Common myeloid progenitor, CD34-positive (primary cell): ENCODE measurements at regions of chr10 and their contacts with region 1.

Region 1: DNA sequence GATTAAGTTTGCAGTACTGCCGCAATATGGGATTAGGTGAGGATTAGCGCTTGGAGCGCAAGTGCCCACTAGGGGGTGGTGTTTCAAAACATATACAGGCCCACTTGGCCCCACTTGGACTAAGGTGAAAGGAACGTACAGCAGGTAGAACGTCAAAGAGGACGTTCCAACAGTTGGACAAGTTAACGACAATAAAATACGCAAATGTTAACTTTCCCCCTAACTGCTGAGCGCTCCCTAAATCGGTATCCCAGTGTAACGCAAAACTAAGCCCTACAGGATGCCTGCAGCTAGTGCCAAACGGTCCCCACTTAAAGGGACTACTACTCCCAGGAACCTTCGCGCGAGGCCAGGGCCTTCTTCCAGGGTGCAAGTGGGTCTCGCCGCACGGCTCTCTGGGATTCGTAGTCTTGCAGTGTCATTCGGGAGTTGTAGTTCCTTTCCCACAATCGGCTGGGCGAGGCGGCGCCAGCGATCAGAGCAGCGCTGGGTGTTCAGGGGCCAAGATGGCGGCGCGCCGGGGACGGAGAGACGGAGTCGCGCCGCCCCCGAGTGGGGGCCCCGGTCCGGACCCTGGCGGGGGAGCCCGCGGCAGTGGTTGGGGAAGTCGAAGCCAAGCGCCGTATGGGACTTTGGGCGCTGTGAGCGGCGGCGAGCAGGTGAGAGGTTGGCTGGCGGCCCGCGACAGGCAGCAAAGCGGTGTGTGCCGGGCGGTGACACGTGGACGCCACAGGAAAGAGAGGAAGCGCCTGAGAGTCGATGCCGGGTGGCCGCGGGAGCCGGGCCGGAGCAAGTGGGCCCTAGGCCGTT is at the start of gene PPRC1:
- DNase-seq: peak; percentile 99 to 100 (median 100)
- H3K4me3 ChIP-seq: peak within 1 kb of the TSS; percentile 70 to 96 (median 91)
- H3K27ac ChIP-seq: peak within 1 kb of the TSS; percentile 70 to 87
- H3K4me1 ChIP-seq: peaks cover 11 to 37% (median 18%) of the 10 kb centered on the region in 4 experiments
- H3K27me3 ChIP-seq: no peaks in the 10 kb centered on the region

Region 2: DNA sequence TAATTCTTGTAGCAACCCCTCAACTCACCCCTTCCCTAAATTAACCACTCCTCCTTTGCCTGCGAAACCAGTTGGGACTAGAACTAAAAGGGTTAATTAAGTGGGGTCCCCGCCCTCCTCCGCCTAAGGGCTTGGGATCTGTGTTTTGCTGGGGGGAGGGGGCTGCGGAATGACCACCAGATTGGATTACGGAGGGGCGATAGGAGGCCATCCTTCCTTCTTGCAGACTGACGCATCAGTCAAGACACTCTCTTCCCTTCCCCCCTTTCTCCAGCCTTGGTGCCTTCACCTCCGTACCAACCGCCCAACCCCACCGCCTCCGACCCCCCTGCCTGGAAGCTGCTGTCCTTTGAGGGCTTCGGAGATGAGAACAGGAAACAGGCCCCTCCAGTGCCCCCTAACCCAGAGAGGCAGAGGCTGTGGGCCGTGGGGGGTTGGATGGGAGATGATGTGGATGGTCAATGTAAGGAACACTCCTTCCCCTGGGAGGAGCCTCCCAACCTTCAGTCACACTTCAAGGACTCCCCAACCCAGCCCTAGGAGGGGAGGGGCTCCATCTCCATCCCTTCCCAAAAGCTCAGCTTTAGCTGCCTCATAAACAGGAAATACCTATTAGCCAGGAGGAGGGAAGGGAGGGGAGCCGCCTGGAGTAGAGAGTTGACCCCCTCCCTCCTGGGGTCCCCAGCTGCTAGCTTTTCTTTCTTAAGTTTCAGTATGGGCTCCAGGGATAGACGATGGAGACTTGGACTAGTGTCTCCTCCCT is 11.6 kb before region 1 on chr10:
- CTCF ChIA-PET with region 1: interaction called, 36 read pairs
- POLR2A ChIA-PET with region 1: interaction called, 4 read pairs
- DNase-seq: peak in 2 of 3 donors; percentile 66 to 73
- H3K4me3 ChIP-seq: peak overlapping the region; percentile 64 to 95 (median 91)
- H3K27ac ChIP-seq: peak overlapping the region; percentile 75 to 89
- H3K4me1 ChIP-seq: peaks cover 15 to 55% (median 46%) of the 10 kb centered on the region in 4 experiments
- H3K27me3 ChIP-seq: no peaks in the 10 kb centered on the region

Region 3: DNA sequence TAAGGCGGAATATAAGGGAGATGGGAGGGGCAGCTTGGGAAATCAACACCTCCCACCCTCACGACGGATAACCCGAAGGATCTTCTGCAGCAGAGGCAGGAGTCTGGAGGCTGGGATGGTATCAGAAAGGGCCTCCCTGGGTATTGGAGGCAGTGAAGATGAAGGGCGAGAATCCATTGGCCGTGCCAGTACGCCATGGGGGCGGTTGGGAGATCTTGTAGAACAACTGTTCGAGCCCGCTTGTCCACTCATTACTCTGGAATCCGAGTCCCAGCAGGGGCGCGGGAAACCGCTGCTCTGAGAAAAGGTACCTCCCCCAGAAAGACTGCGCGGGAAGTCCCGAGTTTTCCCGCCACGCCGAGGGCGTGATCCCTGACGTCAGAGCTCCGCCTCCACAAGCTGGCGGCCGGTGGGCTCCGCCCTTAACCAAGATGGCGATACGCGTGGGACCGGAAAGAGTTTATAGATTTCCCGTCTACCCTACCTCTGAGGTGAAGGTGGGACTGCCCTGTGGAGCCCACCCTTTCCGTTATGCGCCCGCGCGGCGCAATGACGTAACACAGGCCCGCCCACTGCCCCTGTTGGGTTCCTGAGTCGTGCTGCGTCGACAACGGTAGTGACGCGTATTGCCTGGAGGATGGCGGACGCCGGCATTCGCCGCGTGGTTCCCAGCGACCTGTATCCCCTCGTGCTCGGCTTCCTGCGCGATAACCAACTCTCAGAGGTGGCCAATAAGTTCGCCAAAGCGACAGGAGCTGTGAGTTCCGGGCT is 19.2 kb after region 1 on chr10 and contains the start of gene NOLC1:
- CTCF ChIA-PET with region 1: interaction called, 64 read pairs
- POLR2A ChIA-PET with region 1: interaction called, 4 read pairs
- DNase-seq: peak; percentile 99
- H3K4me3 ChIP-seq: peak within 1 kb of the TSS; percentile 67 to 99 (median 98)
- H3K27ac ChIP-seq: peak within 1 kb of the TSS; percentile 89 to 92
- H3K4me1 ChIP-seq: peaks cover 7 to 23% (median 21%) of the 10 kb centered on the region in 4 experiments
- H3K27me3 ChIP-seq: no peaks in the 10 kb centered on the region